Dorsolateral prefrontal cortex (tissue), 120 donors: ENCODE measurements at regions of chr11 and their contacts with region 1.

Region 1: GRCh38 chr11:123640677-123641494 is 13.5 kb downstream of the SCN3B start:
- DNase-seq: peak in 8 of 10 donors; percentile 33 to 72 (median 60)
- H3K4me3 ChIP-seq: peak overlapping the region in 5 of 59 donors; percentile 2 to 33 (median 12)
- H3K27ac ChIP-seq: peak overlapping the region in 8 of 59 donors; percentile 0 to 48 (median 26)
- H3K27me3 ChIP-seq: peaks cover 0 to 7% (median 0%) of the 10 kb centered on the region in 45 donors
- CTCF ChIP-seq: peak; percentile 48 to 81 (median 72)

Region 2: GRCh38 chr11:123628936-123629683 is 11.8 kb before region 1 on chr11:
- intact Hi-C with region 1: no loop called
- DNase-seq: peak in 5 of 10 donors; percentile 32 to 68 (median 44)
- H3K4me3 ChIP-seq: no peak overlapping the region
- H3K27ac ChIP-seq: peak overlapping the region in 15 of 59 donors; percentile 4 to 70 (median 29)
- H3K27me3 ChIP-seq: no peaks in the 10 kb centered on the region
- CTCF ChIP-seq: no peak

Region 3: DNA sequence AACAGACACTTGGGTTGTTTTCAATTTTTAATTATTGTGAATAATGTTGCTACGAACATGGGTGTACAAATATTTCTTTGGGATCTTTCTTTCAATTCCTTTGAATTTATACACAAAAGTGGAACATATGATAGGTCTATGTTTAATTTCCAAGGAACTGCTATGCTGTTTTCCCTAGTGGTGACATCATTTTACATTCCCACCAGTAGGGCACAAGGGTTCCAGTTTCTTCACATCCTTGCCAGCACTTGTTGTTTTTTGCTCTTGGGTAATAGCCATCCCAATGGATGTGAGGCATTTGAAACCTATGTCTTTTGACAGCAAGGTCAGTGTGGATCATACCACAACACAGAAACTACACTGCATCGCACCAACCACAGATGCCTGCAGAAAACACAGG is 55.3 kb after region 1 on chr11:
- intact Hi-C with region 1: no loop called
- DNase-seq: no peak
- H3K4me3 ChIP-seq: no peak overlapping the region
- H3K27ac ChIP-seq: no peak overlapping the region
- H3K27me3 ChIP-seq: peaks cover 0 to 13% (median 0%) of the 10 kb centered on the region in 45 donors
- CTCF ChIP-seq: no peak

Region 4: DNA sequence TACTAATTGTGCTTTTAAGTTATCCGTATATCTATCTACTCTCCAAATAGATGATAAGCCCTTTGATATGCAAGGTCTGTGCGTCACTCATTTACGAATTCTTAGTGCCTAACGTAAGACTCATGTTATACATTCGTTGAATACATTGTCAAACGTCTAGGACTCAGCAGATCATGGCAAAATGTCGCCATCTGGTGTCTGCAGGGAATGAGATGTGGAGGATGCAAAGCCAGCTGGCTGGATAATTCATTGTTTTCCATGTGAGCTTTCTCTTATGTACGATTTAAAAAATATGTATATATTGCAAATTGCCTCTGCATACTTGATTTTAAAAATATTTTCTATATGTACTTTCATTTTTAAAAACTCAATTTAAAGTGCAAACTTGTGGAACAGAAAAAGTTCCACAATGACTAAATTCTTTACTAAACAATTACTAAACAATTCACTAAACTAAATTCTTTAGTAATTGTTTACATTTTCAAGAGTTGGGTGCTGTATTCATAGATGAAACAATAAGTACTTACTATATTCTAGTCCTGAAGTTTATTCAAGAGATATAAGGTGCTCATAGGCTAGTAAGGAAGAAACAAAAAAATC is 66.8 kb after region 1 on chr11:
- intact Hi-C with region 1: loop called (anchors 2 to 5 kb)
- DNase-seq: peak; percentile 24 to 81 (median 72)
- H3K4me3 ChIP-seq: no peak overlapping the region
- H3K27ac ChIP-seq: no peak overlapping the region
- H3K27me3 ChIP-seq: peaks cover 0 to 4% (median 0%) of the 10 kb centered on the region in 45 donors
- CTCF ChIP-seq: peak; percentile 32 to 89 (median 72)